ENCODE measurements at regions of chr2 and their contacts with region 1.

Region 1: GRCh38 chr2:218691234-218691633 is 19.3 kb downstream of the STK36 start:
- DNase-seq: peak; percentile 19
- ATAC-seq: peak; percentile 58
- H3K4me3 ChIP-seq: no peak overlapping the region
- H3K27ac ChIP-seq: no peak overlapping the region
- H3K4me1 ChIP-seq: no peaks in the 10 kb centered on the region
- H3K27me3 ChIP-seq: no peaks in the 10 kb centered on the region
- CTCF ChIP-seq: no peak

Region 2: DNA sequence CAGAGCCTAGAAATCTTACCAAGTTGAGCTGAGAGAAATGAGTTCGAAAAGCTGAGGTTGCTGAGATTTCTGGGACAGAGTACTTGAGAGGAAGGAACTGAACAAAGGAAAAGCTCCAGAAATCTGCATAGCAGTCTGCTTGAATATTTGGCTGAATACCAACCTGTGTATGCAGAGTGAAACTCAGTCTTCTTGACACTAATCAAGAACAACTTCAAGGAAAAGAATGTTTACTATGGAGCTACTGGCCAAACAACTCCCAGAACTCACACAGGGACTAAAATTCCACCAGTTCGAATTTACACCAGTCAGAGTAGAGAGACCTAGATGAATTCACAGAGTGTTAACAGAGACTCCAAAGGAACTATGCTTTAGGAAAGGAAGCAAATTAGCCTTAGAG is 189.6 kb before region 1 on chr2:
- CTCF ChIA-PET with region 1: no interaction called
- POLR2A ChIA-PET with region 1: no interaction called
- intact Hi-C with region 1: no loop called
- DNase-seq: no peak
- ATAC-seq: no peak
- H3K4me3 ChIP-seq: no peak overlapping the region
- H3K27ac ChIP-seq: no peak overlapping the region
- H3K4me1 ChIP-seq: no peaks in the 10 kb centered on the region
- H3K27me3 ChIP-seq: no peaks in the 10 kb centered on the region
- CTCF ChIP-seq: no peak

Region 3: GRCh38 chr2:218659258-218659987 is 31.8 kb before region 1 on chr2 and contains the starts of genes BCS1L and ZNF142:
- CTCF ChIA-PET with region 1: interaction called, 20 read pairs
- POLR2A ChIA-PET with region 1: no interaction called
- intact Hi-C with region 1: loop called (anchors 1 kb)
- DNase-seq: peak; percentile 91
- ATAC-seq: peak; percentile 92
- H3K4me3 ChIP-seq: peak within 1 kb of the TSS; percentile 100
- H3K27ac ChIP-seq: peak within 1 kb of the TSS; percentile 61
- H3K4me1 ChIP-seq: peaks cover 20% of the 10 kb centered on the region
- H3K27me3 ChIP-seq: no peaks in the 10 kb centered on the region
- CTCF ChIP-seq: no peak
- total RNA-seq, gene BCS1L: 41.3 and 48.5 TPM in 2 replicates
- total RNA-seq, gene ZNF142: 35.5 and 36.3 TPM in 2 replicates

Region 4: DNA sequence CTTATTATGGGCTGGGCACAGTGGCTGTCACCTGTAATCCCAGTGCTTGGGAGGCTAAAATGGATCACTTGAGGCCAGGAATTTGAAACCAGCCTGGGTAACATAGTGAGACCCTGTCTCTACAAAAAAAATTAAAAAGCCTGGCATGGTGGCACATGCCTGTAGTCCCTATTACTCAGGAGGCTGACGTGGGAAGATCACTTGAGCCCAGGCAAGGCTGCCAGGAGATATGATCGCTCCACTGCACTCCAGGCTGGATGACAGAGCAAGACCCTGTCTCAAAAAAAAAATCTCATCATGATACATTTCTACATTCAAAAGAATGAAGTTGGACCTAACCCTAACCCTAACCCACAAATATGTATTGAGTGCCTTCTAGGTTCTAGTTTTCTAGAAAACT is 70.6 kb after region 1 on chr2:
- CTCF ChIA-PET with region 1: interaction called, 17 read pairs
- POLR2A ChIA-PET with region 1: no interaction called
- intact Hi-C with region 1: no loop called
- DNase-seq: no peak
- ATAC-seq: no peak
- H3K4me3 ChIP-seq: no peak overlapping the region
- H3K27ac ChIP-seq: no peak overlapping the region
- H3K4me1 ChIP-seq: no peaks in the 10 kb centered on the region
- H3K27me3 ChIP-seq: no peaks in the 10 kb centered on the region
- CTCF ChIP-seq: no peak

Measured in PC-3 (cell line).